ENCODE measurements at regions of chr17 and their contacts with region 1.

Region 1: GRCh38 chr17:77331301-77331864 is 190.6 kb downstream of the SEC14L1 start:
- DNase-seq: peak; percentile 90 to 99 (median 96)
- ATAC-seq: peak; percentile 79
- H3K4me3 ChIP-seq: peak overlapping the region; percentile 10 to 42
- H3K4me3 Mint-ChIP-seq: peak overlapping the region; percentile 79
- H3K27ac ChIP-seq: peak overlapping the region; percentile 32 to 56
- H3K27ac Mint-ChIP-seq: peak overlapping the region; percentile 90
- H3K4me1 ChIP-seq: peaks cover 41% of the 10 kb centered on the region
- H3K4me1 Mint-ChIP-seq: peaks cover 46% of the 10 kb centered on the region
- H3K27me3 ChIP-seq: no peaks in the 10 kb centered on the region
- H3K27me3 Mint-ChIP-seq: no peaks in the 10 kb centered on the region
- CTCF ChIP-seq: peak; percentile 87

Region 2: GRCh38 chr17:77356109-77356689 is 24.8 kb after region 1 on chr17:
- CTCF ChIA-PET with region 1: interaction called, 10 read pairs
- POLR2A ChIA-PET with region 1: interaction called, 4 read pairs
- intact Hi-C with region 1: no loop called
- DNase-seq: peak in 1 of 9 experiments; percentile 44
- ATAC-seq: peak; percentile 26
- H3K4me3 ChIP-seq: no peak overlapping the region
- H3K4me3 Mint-ChIP-seq: no peak overlapping the region
- H3K27ac ChIP-seq: no peak overlapping the region
- H3K27ac Mint-ChIP-seq: no peak overlapping the region
- H3K4me1 ChIP-seq: peaks cover 8% of the 10 kb centered on the region
- H3K4me1 Mint-ChIP-seq: peaks cover 23% of the 10 kb centered on the region
- H3K27me3 ChIP-seq: no peaks in the 10 kb centered on the region
- H3K27me3 Mint-ChIP-seq: no peaks in the 10 kb centered on the region
- CTCF ChIP-seq: no peak

Region 3: GRCh38 chr17:77391668-77392375 is 60.4 kb after region 1 on chr17:
- CTCF ChIA-PET with region 1: interaction called, 36 read pairs
- POLR2A ChIA-PET with region 1: interaction called, 3 read pairs
- intact Hi-C with region 1: no loop called
- DNase-seq: peak in 6 of 9 experiments; percentile 34 to 78 (median 54)
- ATAC-seq: peak; percentile 46
- H3K4me3 ChIP-seq: no peak overlapping the region
- H3K4me3 Mint-ChIP-seq: peak overlapping the region; percentile 54
- H3K27ac ChIP-seq: peak overlapping the region in 1 of 2 experiments; percentile 7
- H3K27ac Mint-ChIP-seq: peak overlapping the region; percentile 84
- H3K4me1 ChIP-seq: peaks cover 83% of the 10 kb centered on the region
- H3K4me1 Mint-ChIP-seq: peaks cover 79% of the 10 kb centered on the region
- H3K27me3 ChIP-seq: no peaks in the 10 kb centered on the region
- H3K27me3 Mint-ChIP-seq: no peaks in the 10 kb centered on the region
- CTCF ChIP-seq: no peak

Region 4: GRCh38 chr17:77444984-77445759 is 113.8 kb after region 1 on chr17:
- CTCF ChIA-PET with region 1: interaction called, 12 read pairs
- POLR2A ChIA-PET with region 1: interaction called, 27 read pairs
- intact Hi-C with region 1: loop called in 1 of 2 experiments (anchors 1 kb)
- DNase-seq: peak; percentile 75 to 99 (median 85)
- ATAC-seq: peak; percentile 62
- H3K4me3 ChIP-seq: peak overlapping the region; percentile 32 to 38
- H3K4me3 Mint-ChIP-seq: peak overlapping the region; percentile 82
- H3K27ac ChIP-seq: peak overlapping the region; percentile 64 to 72
- H3K27ac Mint-ChIP-seq: peak overlapping the region; percentile 97
- H3K4me1 ChIP-seq: peaks cover 92% of the 10 kb centered on the region
- H3K4me1 Mint-ChIP-seq: peaks cover 90% of the 10 kb centered on the region
- H3K27me3 ChIP-seq: no peaks in the 10 kb centered on the region
- H3K27me3 Mint-ChIP-seq: no peaks in the 10 kb centered on the region
- CTCF ChIP-seq: no peak

Region 5: DNA sequence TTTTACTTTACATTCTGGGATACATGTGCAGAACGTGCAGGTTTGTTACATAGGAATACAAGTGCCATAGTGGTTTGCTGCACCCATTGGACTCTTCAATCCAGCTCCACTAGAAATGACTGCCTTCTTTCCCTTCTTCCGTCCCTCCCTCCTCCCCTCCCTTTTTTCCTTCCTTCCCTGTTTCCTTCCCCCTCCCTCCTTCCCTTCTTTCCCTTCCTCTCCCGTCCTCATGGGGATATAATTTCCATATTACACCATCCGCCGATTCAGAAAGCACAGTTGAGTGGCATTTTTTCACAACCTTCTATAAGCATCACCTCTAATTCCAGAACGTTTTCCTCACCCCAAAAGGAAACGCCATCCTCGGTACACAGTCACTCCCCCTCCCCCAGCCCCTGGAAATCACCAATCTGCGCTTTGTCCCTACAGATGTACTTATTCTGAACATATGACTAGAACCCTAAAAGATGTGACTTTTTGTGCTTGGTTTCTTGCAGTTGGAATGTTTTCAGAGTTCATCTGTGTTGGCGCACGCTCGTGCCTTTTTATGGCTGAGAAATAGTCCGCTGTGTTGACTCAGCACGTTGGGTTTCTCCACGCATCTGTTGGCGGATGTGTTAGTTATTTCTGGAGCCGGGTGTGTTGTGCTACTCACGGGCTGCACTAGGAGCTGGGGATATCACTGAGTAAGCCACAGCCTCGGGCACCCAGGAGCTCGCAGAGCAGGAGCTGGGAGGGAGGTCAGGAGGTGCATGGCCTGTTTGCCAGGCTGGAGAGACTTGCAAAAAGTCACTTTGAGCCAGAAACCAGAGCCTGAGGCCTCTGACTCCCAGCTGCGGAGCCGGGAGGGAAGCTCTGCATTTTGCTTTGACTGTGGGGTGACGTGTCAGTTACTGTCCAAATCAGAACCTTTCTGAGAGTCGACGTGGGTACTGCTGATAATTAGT is 145.8 kb after region 1 on chr17:
- CTCF ChIA-PET with region 1: interaction called, 3 read pairs
- POLR2A ChIA-PET with region 1: interaction called, 8 read pairs
- intact Hi-C with region 1: loop called in 1 of 2 experiments (anchors 5 kb)
- DNase-seq: peak in 2 of 9 experiments; percentile 50 to 58
- ATAC-seq: peak; percentile 21
- H3K4me3 ChIP-seq: no peak overlapping the region
- H3K4me3 Mint-ChIP-seq: peak overlapping the region; percentile 54
- H3K27ac ChIP-seq: peak overlapping the region in 1 of 2 experiments; percentile 11
- H3K27ac Mint-ChIP-seq: peak overlapping the region; percentile 99
- H3K4me1 ChIP-seq: peaks cover 98% of the 10 kb centered on the region
- H3K4me1 Mint-ChIP-seq: peaks cover 86% of the 10 kb centered on the region
- H3K27me3 ChIP-seq: no peaks in the 10 kb centered on the region
- H3K27me3 Mint-ChIP-seq: no peaks in the 10 kb centered on the region
- CTCF ChIP-seq: no peak

Region 6: GRCh38 chr17:77542551-77543490 is 211.4 kb after region 1 on chr17:
- CTCF ChIA-PET with region 1: no interaction called
- POLR2A ChIA-PET with region 1: no interaction called
- intact Hi-C with region 1: no loop called
- DNase-seq: peak; percentile 32 to 78 (median 63)
- ATAC-seq: peak; percentile 83
- H3K4me3 ChIP-seq: no peak overlapping the region
- H3K4me3 Mint-ChIP-seq: no peak overlapping the region
- H3K27ac ChIP-seq: no peak overlapping the region
- H3K27ac Mint-ChIP-seq: no peak overlapping the region
- H3K4me1 ChIP-seq: no peaks in the 10 kb centered on the region
- H3K4me1 Mint-ChIP-seq: no peaks in the 10 kb centered on the region
- H3K27me3 ChIP-seq: no peaks in the 10 kb centered on the region
- H3K27me3 Mint-ChIP-seq: peaks cover 3% of the 10 kb centered on the region
- CTCF ChIP-seq: peak; percentile 84

Measured in CD8-positive, alpha-beta T cell (primary cell).